Activated CD8-positive, alpha-beta memory T cell treated with anti-CD3 and anti-CD28 coated beads, Interleukin-2, amount 10 ng/mL, durations not matched to agents 7 days and 5 days (primary cell): ENCODE measurements at regions of chr17 and their contacts with region 1.

Region 1: GRCh38 chr17:77645072-77646045 is 313.1 kb upstream of the TNRC6C start:
- DNase-seq: peak; percentile 85
- ATAC-seq: peak; percentile 81
- H3K4me3 Mint-ChIP-seq: peak overlapping the region; percentile 64
- H3K27ac Mint-ChIP-seq: peak overlapping the region; percentile 92
- H3K4me1 Mint-ChIP-seq: peaks cover 34% of the 10 kb centered on the region
- H3K27me3 Mint-ChIP-seq: peaks cover 3% of the 10 kb centered on the region

Region 2: DNA sequence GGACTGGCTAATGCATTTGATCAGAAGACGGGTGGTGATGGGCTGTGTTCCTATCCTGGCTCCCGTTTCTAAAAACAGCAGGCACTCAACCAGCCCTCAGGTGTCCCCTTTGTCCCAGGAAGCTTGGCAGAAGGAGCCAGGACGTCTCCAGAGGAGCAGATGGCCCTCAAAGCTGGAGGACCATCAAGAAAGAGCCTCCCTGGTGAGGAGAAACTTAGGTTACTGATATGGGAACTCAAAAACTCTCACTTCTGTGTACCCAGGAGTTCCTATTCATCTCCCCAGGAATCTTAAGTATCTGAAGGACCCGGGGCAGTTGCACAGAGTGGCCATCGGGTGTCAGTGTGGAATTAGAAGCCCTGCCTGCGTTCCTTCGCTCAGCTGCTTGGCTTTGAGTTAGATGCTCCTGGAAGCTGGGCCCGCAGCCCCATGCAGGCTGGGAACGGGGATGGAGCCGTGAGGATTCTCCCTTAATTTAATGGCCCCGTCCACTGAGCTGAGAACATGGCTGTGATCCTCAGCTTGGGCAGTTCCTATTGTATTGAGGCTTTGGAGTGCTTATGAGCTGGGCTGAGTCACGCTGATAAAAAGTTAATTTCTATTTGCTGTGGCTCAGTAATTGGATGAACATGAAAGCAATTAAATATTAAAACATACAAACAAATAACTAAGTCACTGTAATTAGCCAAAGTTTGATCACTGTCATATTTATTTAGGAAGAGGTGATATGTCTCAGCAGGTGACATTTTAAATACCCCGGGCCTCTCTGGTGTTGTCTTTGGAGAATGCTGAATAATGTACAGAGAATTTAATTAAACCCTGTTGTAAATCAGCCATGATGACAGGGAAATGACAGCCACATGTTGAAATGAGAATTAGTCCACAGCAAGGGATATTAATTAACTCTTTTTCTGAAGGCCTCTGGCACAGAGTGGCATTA is 102.5 kb before region 1 on chr17:
- CTCF ChIA-PET with region 1: interaction called, 13 read pairs
- DNase-seq: peak; percentile 75
- ATAC-seq: peak; percentile 88
- H3K4me3 Mint-ChIP-seq: no peak overlapping the region
- H3K27ac Mint-ChIP-seq: no peak overlapping the region
- H3K4me1 Mint-ChIP-seq: peaks cover 4% of the 10 kb centered on the region
- H3K27me3 Mint-ChIP-seq: peaks cover 47% of the 10 kb centered on the region

Region 3: DNA sequence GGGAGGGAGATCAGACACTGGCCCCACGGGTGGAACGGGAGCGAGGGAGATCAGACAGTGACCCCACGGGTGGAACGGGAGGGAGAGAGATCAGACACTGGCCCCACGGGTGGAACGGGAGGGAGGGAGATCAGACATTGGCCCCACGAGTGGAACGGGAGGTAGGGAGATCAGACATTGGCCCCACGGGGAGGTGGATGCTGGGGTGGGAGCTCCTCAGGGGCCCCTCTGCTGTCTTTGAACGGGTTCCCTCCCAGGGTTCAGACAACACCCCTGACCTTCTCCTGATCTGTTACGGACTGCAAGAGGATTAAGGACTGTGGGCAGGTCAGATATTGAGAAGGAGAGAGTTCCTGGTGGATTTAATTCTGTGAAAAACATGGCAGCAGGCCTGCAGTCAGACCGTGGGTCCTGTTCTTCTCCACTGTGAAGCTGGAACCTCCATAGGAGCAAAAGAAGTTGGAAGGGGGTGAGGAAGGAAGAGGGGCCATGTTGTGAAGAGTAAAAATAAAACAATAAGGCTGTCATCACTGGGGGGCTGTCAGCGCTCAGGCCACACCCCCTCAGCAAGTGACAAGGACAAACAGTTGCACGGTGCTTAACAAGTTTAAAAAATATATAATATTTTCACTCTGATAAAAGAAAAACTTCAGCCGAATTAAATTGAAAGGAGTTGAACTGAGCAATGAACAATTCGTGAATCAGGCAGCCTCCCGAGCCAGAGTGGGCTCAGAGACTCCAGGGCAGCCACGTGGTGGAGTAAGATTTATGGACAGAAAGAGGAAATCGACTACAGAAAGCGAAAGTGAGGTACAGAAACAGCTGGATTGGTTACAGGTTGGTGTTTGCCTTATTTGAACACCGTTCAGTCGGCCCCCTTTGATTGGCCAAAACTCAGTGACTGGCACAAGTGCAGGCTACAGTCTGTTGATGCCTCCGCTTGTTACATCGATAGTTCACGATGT is 35.5 kb before region 1 on chr17:
- CTCF ChIA-PET with region 1: interaction called, 10 read pairs
- DNase-seq: peak; percentile 84
- ATAC-seq: peak; percentile 98
- H3K4me3 Mint-ChIP-seq: peak overlapping the region; percentile 41
- H3K27ac Mint-ChIP-seq: peak overlapping the region; percentile 66
- H3K4me1 Mint-ChIP-seq: peaks cover 25% of the 10 kb centered on the region
- H3K27me3 Mint-ChIP-seq: peaks cover 17% of the 10 kb centered on the region

Region 4: GRCh38 chr17:77666881-77667395 is 21.6 kb after region 1 on chr17:
- CTCF ChIA-PET with region 1: interaction called, 12 read pairs
- DNase-seq: peak; percentile 95
- ATAC-seq: peak; percentile 95
- H3K4me3 Mint-ChIP-seq: peak overlapping the region; percentile 91
- H3K27ac Mint-ChIP-seq: peak overlapping the region; percentile 94
- H3K4me1 Mint-ChIP-seq: peaks cover 43% of the 10 kb centered on the region
- H3K27me3 Mint-ChIP-seq: no peaks in the 10 kb centered on the region

Region 5: GRCh38 chr17:77734341-77735080 is 89.2 kb after region 1 on chr17:
- CTCF ChIA-PET with region 1: no interaction called
- DNase-seq: peak; percentile 38
- ATAC-seq: no peak
- H3K4me3 Mint-ChIP-seq: no peak overlapping the region
- H3K27ac Mint-ChIP-seq: no peak overlapping the region
- H3K4me1 Mint-ChIP-seq: no peaks in the 10 kb centered on the region
- H3K27me3 Mint-ChIP-seq: peaks cover 43% of the 10 kb centered on the region